ENCODE measurements at regions of chr5 and their contacts with region 1.

Region 1: GRCh38 chr5:85998656-85999055 is 619.1 kb upstream of the COX7C start:
- DNase-seq: no peak
- H3K4me3 ChIP-seq: no peak overlapping the region
- H3K4me3 Mint-ChIP-seq: no peak overlapping the region
- H3K27ac ChIP-seq: no peak overlapping the region
- H3K27ac Mint-ChIP-seq: no peak overlapping the region
- H3K4me1 ChIP-seq: no peaks in the 10 kb centered on the region
- H3K4me1 Mint-ChIP-seq: no peaks in the 10 kb centered on the region
- H3K27me3 ChIP-seq: no peaks in the 10 kb centered on the region
- H3K27me3 Mint-ChIP-seq: no peaks in the 10 kb centered on the region

Region 2: DNA sequence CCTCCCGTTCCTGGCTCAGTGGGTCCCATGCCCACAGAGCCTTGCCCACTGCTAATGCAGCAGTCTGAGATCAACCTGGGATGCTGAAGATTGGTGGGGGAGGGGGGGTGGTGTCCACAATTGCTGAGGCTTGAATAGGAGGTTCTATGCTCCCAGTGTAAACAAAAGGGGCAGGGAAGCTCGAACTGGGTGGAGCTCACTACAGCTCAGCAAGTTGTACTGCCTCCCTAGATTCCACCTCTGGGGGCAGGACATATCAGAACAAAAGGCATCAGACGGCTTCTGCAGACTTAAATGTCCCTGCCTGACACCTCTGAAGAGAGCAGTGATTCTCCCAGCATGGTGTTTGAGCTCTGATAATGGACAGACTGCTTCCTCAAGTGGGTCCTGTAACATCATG is 266.5 kb before region 1 on chr5:
- CTCF ChIA-PET with region 1: no interaction called
- POLR2A ChIA-PET with region 1: interaction called, 14 read pairs
- DNase-seq: no peak
- H3K4me3 ChIP-seq: no peak overlapping the region
- H3K4me3 Mint-ChIP-seq: no peak overlapping the region
- H3K27ac ChIP-seq: no peak overlapping the region
- H3K27ac Mint-ChIP-seq: no peak overlapping the region
- H3K4me1 ChIP-seq: no peaks in the 10 kb centered on the region
- H3K4me1 Mint-ChIP-seq: no peaks in the 10 kb centered on the region
- H3K27me3 ChIP-seq: no peaks in the 10 kb centered on the region
- H3K27me3 Mint-ChIP-seq: no peaks in the 10 kb centered on the region

Region 3: GRCh38 chr5:85967684-85968083 is 31.0 kb before region 1 on chr5:
- CTCF ChIA-PET with region 1: no interaction called
- POLR2A ChIA-PET with region 1: no interaction called
- DNase-seq: no peak
- H3K4me3 ChIP-seq: no peak overlapping the region
- H3K4me3 Mint-ChIP-seq: no peak overlapping the region
- H3K27ac ChIP-seq: no peak overlapping the region
- H3K27ac Mint-ChIP-seq: no peak overlapping the region
- H3K4me1 ChIP-seq: no peaks in the 10 kb centered on the region
- H3K4me1 Mint-ChIP-seq: no peaks in the 10 kb centered on the region
- H3K27me3 ChIP-seq: no peaks in the 10 kb centered on the region
- H3K27me3 Mint-ChIP-seq: no peaks in the 10 kb centered on the region